A673 (cell line): ENCODE measurements at regions of chr19 and their contacts with region 1.

Region 1: GRCh38 chr19:17001603-17002183 is 24.9 kb downstream of the CPAMD8 start:
- DNase-seq: no peak
- H3K4me3 ChIP-seq: no peak overlapping the region
- H3K27ac ChIP-seq: no peak overlapping the region
- H3K4me1 ChIP-seq: no peaks in the 10 kb centered on the region
- H3K27me3 ChIP-seq: no peaks in the 10 kb centered on the region
- CTCF ChIP-seq: no peak

Region 2: GRCh38 chr19:16801596-16801995 is 200.1 kb before region 1 on chr19:
- CTCF ChIA-PET with region 1: no interaction called
- POLR2A ChIA-PET with region 1: interaction called, 10 read pairs
- intact Hi-C with region 1: no loop called
- DNase-seq: peak; percentile 52
- H3K4me3 ChIP-seq: no peak overlapping the region
- H3K27ac ChIP-seq: no peak overlapping the region
- H3K4me1 ChIP-seq: no peaks in the 10 kb centered on the region
- H3K27me3 ChIP-seq: no peaks in the 10 kb centered on the region
- CTCF ChIP-seq: no peak

Region 3: DNA sequence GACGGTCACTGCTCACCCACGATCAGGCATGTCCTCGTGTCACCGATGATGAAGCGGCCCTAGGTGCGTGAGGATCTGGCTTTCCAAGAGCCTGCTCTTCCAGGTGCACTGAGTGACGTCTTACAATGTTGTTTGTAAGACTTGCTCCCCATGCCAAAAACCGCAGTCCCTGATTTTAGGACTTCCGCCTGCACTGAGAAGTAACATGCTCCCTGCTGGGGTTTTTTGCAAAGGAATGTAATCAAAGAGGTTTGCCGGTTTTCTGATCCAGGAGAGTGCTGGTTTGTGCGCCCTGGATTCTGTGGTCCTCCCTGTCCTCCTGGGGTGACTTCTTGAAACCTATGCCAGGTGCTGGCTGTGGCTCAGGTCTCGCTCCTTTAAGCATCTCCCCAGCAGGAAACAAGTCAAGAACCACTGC is 112.7 kb after region 1 on chr19:
- CTCF ChIA-PET with region 1: no interaction called
- POLR2A ChIA-PET with region 1: no interaction called
- intact Hi-C with region 1: no loop called
- DNase-seq: peak; percentile 69
- H3K4me3 ChIP-seq: no peak overlapping the region
- H3K27ac ChIP-seq: peak overlapping the region; percentile 57
- H3K4me1 ChIP-seq: peaks cover 16% of the 10 kb centered on the region
- H3K27me3 ChIP-seq: no peaks in the 10 kb centered on the region
- CTCF ChIP-seq: no peak

Region 4: GRCh38 chr19:17248011-17248776 is 246.5 kb after region 1 on chr19:
- CTCF ChIA-PET with region 1: no interaction called
- POLR2A ChIA-PET with region 1: no interaction called
- intact Hi-C with region 1: no loop called
- DNase-seq: no peak
- H3K4me3 ChIP-seq: no peak overlapping the region
- H3K27ac ChIP-seq: no peak overlapping the region
- H3K4me1 ChIP-seq: peaks cover 12% of the 10 kb centered on the region
- H3K27me3 ChIP-seq: no peaks in the 10 kb centered on the region
- CTCF ChIP-seq: no peak